H1 (cell line): ENCODE measurements at regions of chr3 and their contacts with region 1.

Region 1: GRCh38 chr3:46578973-46579755 is 13.1 kb upstream of the LRRC2 start:
- DNase-seq: no peak
- H3K4me3 ChIP-seq: peak overlapping the region; percentile 54 to 97 (median 76)
- H3K27ac ChIP-seq: peak overlapping the region; percentile 8; the same call in 1 of the 2 replicates
- H3K4me1 ChIP-seq: peaks cover 9 to 25% (median 15%) of the 10 kb centered on the region in 4 experiments; a peak in 6 of 7 replicates
- H3K27me3 ChIP-seq: no peaks in the 10 kb centered on the region; a peak in 2 of 7 replicates
- CTCF ChIP-seq: no peak
- EP300 ChIP-seq: no peak
- POLR2A ChIP-seq: no peak
- RAD21 ChIP-seq: no peak

Region 2: DNA sequence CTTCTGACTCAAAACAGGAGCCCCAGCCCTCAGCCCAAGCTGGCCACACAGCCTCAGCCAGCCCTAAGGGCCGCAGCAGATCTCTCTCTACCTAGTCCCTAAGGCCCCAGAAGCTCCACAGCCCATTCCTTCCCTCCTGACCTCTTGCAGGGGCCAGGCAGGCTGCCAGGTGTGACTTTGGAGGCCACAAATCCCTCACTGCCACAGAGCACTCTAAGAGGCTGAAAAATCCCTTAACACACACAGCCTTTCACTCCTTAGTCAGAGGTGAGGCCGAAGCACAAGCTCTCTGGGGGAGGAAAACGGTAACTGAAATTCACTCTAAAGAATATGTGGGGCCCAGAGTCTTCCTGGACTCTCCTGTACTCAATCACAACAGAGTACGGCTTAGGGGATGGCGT is 36.4 kb before region 1 on chr3:
- CTCF ChIA-PET with region 1: interaction called, 4 read pairs
- POLR2A ChIA-PET with region 1: interaction called, 145 read pairs
- DNase-seq: no peak
- H3K4me3 ChIP-seq: no peak overlapping the region
- H3K27ac ChIP-seq: 0 out of 2 replicates have a peak overlapping the region, but pooled peaks have one; percentile 5
- H3K4me1 ChIP-seq: peaks cover 14 to 21% (median 18%) of the 10 kb centered on the region in 4 experiments
- H3K27me3 ChIP-seq: no peaks in the 10 kb centered on the region
- CTCF ChIP-seq: no peak
- EP300 ChIP-seq: no peak
- POLR2A ChIP-seq: no peak
- RAD21 ChIP-seq: no peak

Region 3: DNA sequence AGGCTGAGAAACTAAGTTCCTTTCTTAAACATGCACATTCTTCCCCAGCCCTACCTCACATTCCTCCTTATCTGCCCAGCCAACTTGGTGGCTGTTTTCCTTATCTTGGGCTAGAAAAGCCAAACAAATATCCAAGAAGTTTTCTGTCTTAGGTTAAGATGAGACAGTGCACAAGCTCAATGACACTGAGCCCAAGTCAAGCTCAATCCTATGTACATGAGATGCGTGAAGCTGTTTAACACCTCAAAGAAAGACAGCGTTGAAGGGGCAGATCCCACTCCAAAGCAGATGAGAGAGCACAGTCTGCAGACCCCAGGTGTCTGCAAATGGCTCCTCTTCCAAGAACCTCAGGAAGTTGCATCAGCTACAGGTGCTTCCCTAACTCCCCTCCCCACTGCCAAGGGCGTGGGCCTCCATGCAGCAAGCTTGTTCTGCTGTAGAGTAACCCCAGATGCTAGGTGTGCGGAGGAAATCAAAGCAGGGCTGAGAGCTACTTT is 29.7 kb before region 1 on chr3:
- CTCF ChIA-PET with region 1: interaction called, 4 read pairs
- POLR2A ChIA-PET with region 1: interaction called, 145 read pairs
- DNase-seq: no peak
- H3K4me3 ChIP-seq: no peak overlapping the region
- H3K27ac ChIP-seq: 0 out of 2 replicates have a peak overlapping the region, but pooled peaks have one; percentile 2
- H3K4me1 ChIP-seq: peaks cover 12 to 20% (median 16%) of the 10 kb centered on the region in 4 experiments
- H3K27me3 ChIP-seq: no peaks in the 10 kb centered on the region
- CTCF ChIP-seq: no peak
- EP300 ChIP-seq: no peak
- POLR2A ChIP-seq: no peak
- RAD21 ChIP-seq: no peak

Region 4: DNA sequence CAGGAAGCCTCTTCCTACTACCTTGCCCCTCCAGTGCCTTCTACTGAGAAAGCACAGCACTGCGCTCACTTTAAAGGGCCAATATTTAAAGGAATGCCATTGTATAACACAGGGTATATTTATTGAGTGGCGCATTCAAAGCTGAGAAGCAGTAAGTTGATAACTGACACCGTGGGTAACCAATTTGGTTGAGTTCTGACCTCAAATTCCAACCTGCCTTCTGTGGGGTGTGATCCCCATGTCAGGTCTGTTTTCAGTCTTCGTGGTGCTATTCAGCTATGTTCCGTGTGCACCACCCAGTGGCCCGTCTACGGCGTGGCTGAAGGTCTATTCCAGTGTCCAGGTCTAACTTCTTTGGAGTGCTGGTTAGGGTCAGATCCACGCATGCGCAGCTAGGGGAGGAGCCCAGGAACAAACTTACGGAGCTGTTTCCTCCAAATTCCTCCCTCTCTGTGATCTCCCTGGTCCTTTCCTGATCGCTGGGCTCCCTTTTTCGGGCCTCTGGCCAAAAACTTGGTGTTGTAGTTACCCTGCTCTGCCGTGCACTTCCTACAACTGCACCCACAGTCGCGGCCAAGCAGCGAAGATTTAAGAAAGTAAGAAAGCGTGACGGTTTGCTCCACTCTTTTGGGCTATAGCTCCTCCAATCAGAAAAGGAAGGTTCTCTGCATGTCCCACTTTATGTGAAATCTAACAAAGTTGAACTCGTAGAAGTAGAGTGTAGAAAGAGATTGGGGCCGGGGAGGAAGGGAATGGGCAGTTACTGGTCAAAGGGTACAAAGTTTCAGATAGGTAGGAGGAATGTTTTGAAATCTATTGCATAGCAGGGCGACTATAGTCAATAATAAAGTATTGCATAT is 20.8 kb before region 1 on chr3:
- CTCF ChIA-PET with region 1: interaction called, 7 read pairs
- POLR2A ChIA-PET with region 1: interaction called, 101 read pairs
- DNase-seq: peak in 1 of 2 experiments; percentile 57
- H3K4me3 ChIP-seq: peak overlapping the region in 1 of 4 experiments; percentile 13; a peak in 1 of 8 replicates
- H3K27ac ChIP-seq: no peak overlapping the region
- H3K4me1 ChIP-seq: peaks cover 3 to 12% (median 5%) of the 10 kb centered on the region in 4 experiments; a peak in 5 of 7 replicates
- H3K27me3 ChIP-seq: no peaks in the 10 kb centered on the region; a peak in 1 of 7 replicates
- CTCF ChIP-seq: peak; percentile 67 to 80 (median 71)
- EP300 ChIP-seq: no peak
- POLR2A ChIP-seq: no peak
- RAD21 ChIP-seq: peak; percentile 81 to 85

Region 5: GRCh38 chr3:46566036-46566641 is 13.0 kb before region 1 on chr3 and contains the start of gene LRRC2:
- CTCF ChIA-PET with region 1: interaction called, 8 read pairs
- POLR2A ChIA-PET with region 1: interaction called, 213 read pairs
- DNase-seq: no peak
- H3K4me3 ChIP-seq: peak within 1 kb of the TSS; percentile 31 to 58 (median 44)
- H3K27ac ChIP-seq: no peak within 1 kb of the TSS
- H3K4me1 ChIP-seq: peaks cover 9 to 27% (median 14%) of the 10 kb centered on the region in 4 experiments
- H3K27me3 ChIP-seq: no peaks in the 10 kb centered on the region; a peak in 1 of 7 replicates
- CTCF ChIP-seq: no peak
- EP300 ChIP-seq: no peak
- POLR2A ChIP-seq: no peak
- RAD21 ChIP-seq: no peak
- total RNA-seq, gene LRRC2: 6.4 and 7.3 TPM in 2 replicates

Region 6: DNA sequence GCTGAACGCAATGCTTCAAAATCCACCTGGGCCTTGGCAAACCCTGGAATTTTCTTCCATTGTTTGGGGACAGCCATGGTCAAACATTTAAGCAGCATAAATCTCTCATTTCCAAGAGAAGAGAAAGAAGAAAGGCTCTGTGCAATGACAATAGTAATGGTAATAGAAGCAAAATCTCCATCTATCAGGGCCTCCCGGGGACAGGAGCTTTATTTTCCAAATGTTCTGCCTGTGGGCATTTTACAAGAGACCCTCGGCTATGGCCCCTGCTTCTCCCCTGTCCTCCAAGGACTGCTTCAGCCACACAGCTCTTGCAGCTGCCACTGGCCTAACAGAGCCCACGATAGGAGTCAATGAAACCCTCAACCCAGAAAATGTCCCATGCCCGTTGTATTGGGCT is 20.4 kb after region 1 on chr3:
- CTCF ChIA-PET with region 1: interaction called, 3 read pairs
- POLR2A ChIA-PET with region 1: interaction called, 85 read pairs
- DNase-seq: no peak
- H3K4me3 ChIP-seq: peak overlapping the region in 1 of 4 experiments; percentile 18; a peak in 1 of 8 replicates
- H3K27ac ChIP-seq: peak overlapping the region; percentile 17; the same call in 1 of the 2 replicates
- H3K4me1 ChIP-seq: peaks cover 10 to 22% (median 15%) of the 10 kb centered on the region in 4 experiments; a peak in 6 of 7 replicates
- H3K27me3 ChIP-seq: 0 out of 7 replicates have a peak, but pooled peaks cover 0 to 3% (median 0%) of the 10 kb centered on the region in 4 experiments
- CTCF ChIP-seq: no peak
- EP300 ChIP-seq: no peak
- POLR2A ChIP-seq: no peak
- RAD21 ChIP-seq: no peak

Region 7: GRCh38 chr3:46607603-46608028 is 28.5 kb after region 1 on chr3:
- CTCF ChIA-PET with region 1: interaction called, 4 read pairs
- POLR2A ChIA-PET with region 1: interaction called, 19 read pairs
- DNase-seq: peak in 1 of 2 experiments; percentile 58
- H3K4me3 ChIP-seq: no peak overlapping the region
- H3K27ac ChIP-seq: no peak overlapping the region
- H3K4me1 ChIP-seq: peaks cover 3 to 23% (median 9%) of the 10 kb centered on the region in 4 experiments
- H3K27me3 ChIP-seq: no peaks in the 10 kb centered on the region
- CTCF ChIP-seq: peak; percentile 31 to 72 (median 68)
- EP300 ChIP-seq: no peak
- POLR2A ChIP-seq: no peak
- RAD21 ChIP-seq: peak; percentile 49 to 68